GM10248 (cell line): ENCODE measurements at regions of chr13 and their contacts with region 1.

Region 1: GRCh38 chr13:26228096-26228495 is 6.0 kb upstream of the RNF6 start:
- DNase-seq: no peak
- CTCF ChIP-seq: no peak

Region 2: GRCh38 chr13:25920277-25920676 is 307.8 kb before region 1 on chr13:
- CTCF ChIA-PET with region 1: no interaction called
- POLR2A ChIA-PET with region 1: no interaction called
- DNase-seq: no peak
- CTCF ChIP-seq: no peak

Region 3: GRCh38 chr13:26062844-26063444 is 165.2 kb before region 1 on chr13:
- CTCF ChIA-PET with region 1: no interaction called
- POLR2A ChIA-PET with region 1: no interaction called
- DNase-seq: peak; percentile 18
- CTCF ChIP-seq: peak; percentile 55

Region 4: GRCh38 chr13:26216042-26216441 is 12.1 kb before region 1 on chr13:
- CTCF ChIA-PET with region 1: interaction called, 10 read pairs
- POLR2A ChIA-PET with region 1: no interaction called
- DNase-seq: no peak
- CTCF ChIP-seq: no peak

Region 5: GRCh38 chr13:26449058-26449848 is 221.2 kb after region 1 on chr13:
- CTCF ChIA-PET with region 1: no interaction called
- POLR2A ChIA-PET with region 1: no interaction called
- DNase-seq: no peak
- CTCF ChIP-seq: no peak